Pancreas (tissue), 10 donors: ENCODE measurements at regions of chr6 and their contacts with region 1.

Region 1: GRCh38 chr6:14339711-14340584 is 222.4 kb downstream of the CD83 start:
- DNase-seq: no peak
- ATAC-seq: no peak
- H3K4me3 ChIP-seq: no peak overlapping the region
- H3K27ac ChIP-seq: no peak overlapping the region
- H3K4me1 ChIP-seq: no peaks in the 10 kb centered on the region
- H3K27me3 ChIP-seq: no peaks in the 10 kb centered on the region
- CTCF ChIP-seq: no peak

Region 2: DNA sequence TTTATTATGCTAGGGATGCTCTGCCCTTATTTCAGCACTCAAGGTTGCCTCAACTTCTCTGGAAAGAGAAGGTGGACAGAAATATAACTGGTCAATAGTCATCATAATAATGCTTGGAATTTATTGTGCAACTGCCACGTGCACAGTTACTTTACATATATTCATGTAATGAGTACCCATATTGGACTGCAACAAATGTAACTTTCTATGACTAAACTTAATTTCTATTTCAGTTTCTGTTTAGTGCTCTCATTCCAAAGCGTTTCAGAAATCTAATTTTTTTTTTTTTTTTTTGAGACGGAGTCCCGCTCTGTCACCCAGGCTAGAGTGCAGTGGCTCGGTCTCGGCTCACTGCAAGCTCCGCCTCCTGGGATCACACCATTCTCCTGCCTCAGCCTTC is 250.7 kb before region 1 on chr6:
- intact Hi-C with region 1: no loop called
- DNase-seq: no peak
- ATAC-seq: no peak
- H3K4me3 ChIP-seq: no peak overlapping the region
- H3K27ac ChIP-seq: no peak overlapping the region
- H3K4me1 ChIP-seq: no peaks in the 10 kb centered on the region
- H3K27me3 ChIP-seq: peaks cover 0 to 7% (median 0%) of the 10 kb centered on the region in 4 donors
- CTCF ChIP-seq: no peak

Region 3: DNA sequence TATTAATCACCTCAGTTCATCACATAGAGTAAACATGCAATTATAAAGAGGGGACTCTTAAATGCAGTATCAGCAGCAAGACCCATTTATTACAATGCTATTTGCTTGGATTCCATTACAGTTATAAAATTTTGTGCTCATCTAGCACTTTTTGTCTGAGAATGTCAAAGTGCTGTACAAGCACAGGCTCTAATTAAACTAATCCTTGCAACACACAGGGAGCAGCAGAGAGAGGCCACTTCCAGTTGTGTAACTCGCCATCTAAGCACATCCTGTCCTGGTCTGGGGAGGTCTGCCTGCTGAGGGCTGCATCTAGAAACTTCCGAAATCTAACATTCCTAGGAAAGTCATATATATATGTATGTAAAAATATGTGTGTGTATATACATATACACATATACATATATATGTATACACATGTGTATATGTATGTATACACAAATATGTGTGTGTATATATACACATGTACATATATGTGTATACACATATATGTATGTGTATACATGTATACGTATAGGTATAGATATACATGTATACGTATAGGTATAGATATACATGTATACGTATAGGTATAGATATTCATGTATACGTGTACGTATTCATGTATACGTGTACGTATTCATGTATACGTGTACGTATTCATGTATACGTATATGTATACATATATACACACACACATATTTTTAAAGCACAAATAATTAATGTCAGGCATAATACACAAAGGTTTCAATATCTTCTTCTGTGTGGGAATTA is 769.6 kb after region 1 on chr6:
- intact Hi-C with region 1: loop called in 1 of 3 experiments (anchors 10 kb)
- DNase-seq: no peak
- ATAC-seq: peak in 2 of 4 donors; percentile 36 to 56
- H3K4me3 ChIP-seq: no peak overlapping the region
- H3K27ac ChIP-seq: no peak overlapping the region
- H3K4me1 ChIP-seq: no peaks in the 10 kb centered on the region
- H3K27me3 ChIP-seq: no peaks in the 10 kb centered on the region
- CTCF ChIP-seq: no peak